GM10248 (cell line): ENCODE measurements at regions of chr9 and their contacts with region 1.

Region 1: GRCh38 chr9:1009101-1009707 is 32.7 kb downstream of the DMRT3 start:
- DNase-seq: peak; percentile 75
- CTCF ChIP-seq: peak; percentile 100

Region 2: GRCh38 chr9:613771-614347 is 395.3 kb before region 1 on chr9:
- CTCF ChIA-PET with region 1: interaction called, 23 read pairs
- POLR2A ChIA-PET with region 1: no interaction called
- DNase-seq: peak; percentile 64
- CTCF ChIP-seq: peak; percentile 76

Region 3: GRCh38 chr9:899440-900184 is 109.6 kb before region 1 on chr9:
- CTCF ChIA-PET with region 1: interaction called, 106 read pairs
- POLR2A ChIA-PET with region 1: no interaction called
- DNase-seq: peak; percentile 24
- CTCF ChIP-seq: no peak

Region 4: DNA sequence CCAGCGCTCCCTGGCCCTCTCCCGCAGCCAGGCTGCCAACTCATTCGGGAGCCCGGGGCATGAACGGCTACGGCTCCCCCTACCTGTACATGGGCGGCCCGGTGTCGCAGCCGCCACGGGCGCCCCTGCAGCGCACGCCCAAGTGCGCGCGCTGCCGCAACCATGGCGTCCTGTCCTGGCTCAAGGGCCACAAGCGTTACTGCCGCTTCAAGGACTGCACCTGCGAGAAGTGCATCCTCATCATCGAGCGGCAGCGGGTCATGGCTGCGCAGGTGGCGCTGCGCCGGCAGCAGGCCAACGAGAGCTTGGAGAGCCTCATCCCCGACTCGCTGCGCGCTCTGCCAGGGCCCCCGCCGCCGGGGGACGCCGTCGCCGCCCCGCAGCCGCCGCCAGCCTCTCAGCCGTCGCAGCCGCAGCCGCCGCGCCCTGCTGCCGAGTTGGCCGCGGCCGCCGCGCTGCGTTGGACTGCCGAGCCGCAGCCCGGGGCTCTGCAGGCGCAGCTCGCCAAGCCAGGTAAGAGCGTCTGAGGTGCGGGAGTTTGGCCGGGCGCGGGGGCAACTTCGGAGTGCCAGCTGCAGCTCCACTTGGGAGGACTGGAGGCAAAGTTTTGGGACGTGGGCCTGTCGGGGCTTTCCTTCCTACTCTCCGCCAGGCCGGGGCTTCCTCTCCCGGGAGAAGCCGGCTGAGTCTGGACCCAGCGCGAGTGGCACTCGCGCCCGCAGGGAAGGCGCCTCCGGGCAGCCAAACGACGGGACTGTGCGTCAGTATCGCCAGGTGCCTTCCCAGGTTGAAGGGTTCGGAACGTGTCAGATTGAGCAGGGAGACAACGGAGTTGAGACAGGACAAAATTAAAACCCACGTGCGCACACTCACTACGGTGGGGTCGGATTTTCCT is 32.0 kb before region 1 on chr9:
- CTCF ChIA-PET with region 1: interaction called, 10 read pairs
- POLR2A ChIA-PET with region 1: no interaction called
- DNase-seq: no peak
- CTCF ChIP-seq: no peak

Region 5: DNA sequence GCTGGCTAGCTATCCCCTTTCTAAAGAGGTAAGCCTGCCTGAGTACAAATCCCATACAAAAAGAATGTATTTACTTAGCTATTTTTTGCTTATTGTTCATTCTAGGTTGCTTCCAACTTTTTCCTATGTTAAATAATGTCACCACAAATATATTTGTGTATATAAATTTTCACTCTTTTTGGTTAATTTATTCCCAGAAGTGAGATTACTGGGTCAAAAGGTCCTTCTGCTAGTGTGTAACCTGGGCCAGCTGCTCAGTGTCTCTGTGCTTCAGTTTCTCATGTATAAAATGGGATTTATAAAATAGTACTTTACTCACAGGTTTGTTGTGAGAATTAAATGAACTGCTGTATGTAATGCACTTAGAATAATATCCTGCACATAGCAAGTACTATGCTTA is 17.0 kb after region 1 on chr9:
- CTCF ChIA-PET with region 1: interaction called, 13 read pairs
- POLR2A ChIA-PET with region 1: no interaction called
- DNase-seq: no peak
- CTCF ChIP-seq: no peak